ENCODE measurements at regions of chr15 and their contacts with region 1.

Region 1: GRCh38 chr15:65869127-65869953 is at the start of gene RAB11A:
- DNase-seq: peak; percentile 96
- H3K4me3 Mint-ChIP-seq: peak within 1 kb of the TSS; percentile 99
- H3K27ac Mint-ChIP-seq: peak within 1 kb of the TSS; percentile 99
- H3K4me1 Mint-ChIP-seq: peaks cover 5% of the 10 kb centered on the region
- H3K27me3 Mint-ChIP-seq: no peaks in the 10 kb centered on the region
- CTCF ChIP-seq: peak; percentile 13
- total RNA-seq, gene RAB11A: 139 and 164 TPM in 2 replicates

Region 2: DNA sequence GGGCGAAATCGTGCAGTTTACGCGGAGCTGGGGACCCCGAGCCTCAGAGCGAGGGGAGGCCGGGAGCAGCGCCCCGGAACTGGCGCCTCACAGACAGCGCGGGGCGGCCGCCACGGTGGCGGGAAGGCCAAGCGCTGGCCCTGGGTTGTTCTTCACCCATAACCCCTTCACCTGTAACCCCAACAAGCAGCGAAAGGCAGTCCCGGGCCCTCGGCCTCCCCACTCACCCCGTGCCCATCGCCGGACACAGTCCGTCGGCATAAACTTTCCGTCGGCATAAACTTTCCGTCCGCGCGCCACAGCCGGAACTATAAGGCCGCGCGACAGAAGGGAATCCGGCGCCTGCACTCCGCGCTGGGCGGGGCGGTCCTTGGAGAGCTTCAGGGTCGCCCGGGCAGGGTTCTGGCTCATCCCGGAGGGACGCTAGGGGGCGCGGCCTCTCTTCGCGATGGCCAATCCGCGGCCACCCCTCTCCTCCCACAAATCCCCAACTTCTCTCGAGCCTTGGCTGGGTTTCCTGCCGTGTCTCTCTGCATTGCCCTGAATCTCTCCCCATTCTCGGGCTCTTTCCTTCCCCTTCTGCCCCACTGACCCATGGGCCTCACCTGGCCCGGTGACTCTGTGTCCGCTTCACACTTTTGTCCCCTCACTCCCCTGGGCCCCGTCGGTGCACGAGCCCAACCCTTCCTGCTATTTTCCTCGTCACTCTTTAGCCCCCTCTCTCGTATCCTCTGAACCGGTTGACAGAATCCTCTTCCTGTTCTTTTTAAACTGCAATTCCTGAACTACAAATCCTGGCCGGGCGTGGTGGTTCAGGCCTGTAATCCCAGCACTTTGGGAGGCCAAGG is 258.2 kb before region 1 on chr15 and contains the start of gene INTS14:
- CTCF ChIA-PET with region 1: interaction called, 3 read pairs
- POLR2A ChIA-PET with region 1: interaction called, 51 read pairs
- intact Hi-C with region 1: loop called (anchors 1 kb)
- DNase-seq: peak; percentile 96
- H3K4me3 Mint-ChIP-seq: peak within 1 kb of the TSS; percentile 89
- H3K27ac Mint-ChIP-seq: peak within 1 kb of the TSS; percentile 96
- H3K4me1 Mint-ChIP-seq: peaks cover 15% of the 10 kb centered on the region
- H3K27me3 Mint-ChIP-seq: no peaks in the 10 kb centered on the region
- CTCF ChIP-seq: peak; percentile 39
- total RNA-seq, gene INTS14: 43.9 and 47.0 TPM in 2 replicates

Region 3: DNA sequence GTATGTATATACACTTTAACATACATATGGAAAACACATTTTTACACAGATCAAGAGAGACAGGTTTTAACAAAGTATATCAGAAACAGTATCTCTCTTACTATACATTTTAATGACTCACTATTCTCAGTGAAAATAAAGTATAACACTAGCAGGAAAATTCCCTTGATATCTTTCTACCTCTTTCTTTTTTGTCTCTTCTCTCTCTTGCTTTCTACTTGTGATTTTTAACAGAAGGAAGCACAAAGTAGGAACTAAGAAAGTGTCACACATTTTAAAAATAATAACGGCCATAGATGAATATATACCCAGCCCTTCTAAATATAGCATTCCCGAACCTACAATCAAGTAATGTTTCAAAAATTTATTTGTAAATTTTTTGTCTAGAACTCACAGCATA is 82.1 kb before region 1 on chr15:
- CTCF ChIA-PET with region 1: interaction called, 4 read pairs
- POLR2A ChIA-PET with region 1: interaction called, 89 read pairs
- intact Hi-C with region 1: no loop called
- DNase-seq: no peak
- H3K4me3 Mint-ChIP-seq: peak overlapping the region; percentile 2
- H3K27ac Mint-ChIP-seq: peak overlapping the region; percentile 87
- H3K4me1 Mint-ChIP-seq: peaks cover 14% of the 10 kb centered on the region
- H3K27me3 Mint-ChIP-seq: no peaks in the 10 kb centered on the region
- CTCF ChIP-seq: no peak

Region 4: GRCh38 chr15:65804252-65804931 is 64.9 kb before region 1 on chr15:
- CTCF ChIA-PET with region 1: no interaction called
- POLR2A ChIA-PET with region 1: interaction called, 12 read pairs
- intact Hi-C with region 1: no loop called
- DNase-seq: peak; percentile 38
- H3K4me3 Mint-ChIP-seq: no peak overlapping the region
- H3K27ac Mint-ChIP-seq: no peak overlapping the region
- H3K4me1 Mint-ChIP-seq: peaks cover 11% of the 10 kb centered on the region
- H3K27me3 Mint-ChIP-seq: no peaks in the 10 kb centered on the region
- CTCF ChIP-seq: no peak

Region 5: GRCh38 chr15:65832549-65833364 is 36.6 kb before region 1 on chr15:
- CTCF ChIA-PET with region 1: interaction called, 3 read pairs
- POLR2A ChIA-PET with region 1: interaction called, 19 read pairs
- intact Hi-C with region 1: loop called (anchors 5 kb)
- DNase-seq: peak; percentile 97
- H3K4me3 Mint-ChIP-seq: no peak overlapping the region
- H3K27ac Mint-ChIP-seq: peak overlapping the region; percentile 73
- H3K4me1 Mint-ChIP-seq: peaks cover 14% of the 10 kb centered on the region
- H3K27me3 Mint-ChIP-seq: no peaks in the 10 kb centered on the region
- CTCF ChIP-seq: no peak

Region 6: GRCh38 chr15:66293419-66294156 is 424.2 kb after region 1 on chr15 and contains the start of gene DIS3L:
- CTCF ChIA-PET with region 1: no interaction called
- POLR2A ChIA-PET with region 1: interaction called, 17 read pairs
- intact Hi-C with region 1: no loop called
- DNase-seq: peak; percentile 70
- H3K4me3 Mint-ChIP-seq: peak within 1 kb of the TSS; percentile 83
- H3K27ac Mint-ChIP-seq: peak within 1 kb of the TSS; percentile 75
- H3K4me1 Mint-ChIP-seq: peaks cover 11% of the 10 kb centered on the region
- H3K27me3 Mint-ChIP-seq: no peaks in the 10 kb centered on the region
- CTCF ChIP-seq: no peak
- total RNA-seq, gene DIS3L: 35.6 and 42.8 TPM in 2 replicates

Measured in MCF 10A (cell line).